ENCODE measurements at regions of chr1 and their contacts with region 1.

Region 1: DNA sequence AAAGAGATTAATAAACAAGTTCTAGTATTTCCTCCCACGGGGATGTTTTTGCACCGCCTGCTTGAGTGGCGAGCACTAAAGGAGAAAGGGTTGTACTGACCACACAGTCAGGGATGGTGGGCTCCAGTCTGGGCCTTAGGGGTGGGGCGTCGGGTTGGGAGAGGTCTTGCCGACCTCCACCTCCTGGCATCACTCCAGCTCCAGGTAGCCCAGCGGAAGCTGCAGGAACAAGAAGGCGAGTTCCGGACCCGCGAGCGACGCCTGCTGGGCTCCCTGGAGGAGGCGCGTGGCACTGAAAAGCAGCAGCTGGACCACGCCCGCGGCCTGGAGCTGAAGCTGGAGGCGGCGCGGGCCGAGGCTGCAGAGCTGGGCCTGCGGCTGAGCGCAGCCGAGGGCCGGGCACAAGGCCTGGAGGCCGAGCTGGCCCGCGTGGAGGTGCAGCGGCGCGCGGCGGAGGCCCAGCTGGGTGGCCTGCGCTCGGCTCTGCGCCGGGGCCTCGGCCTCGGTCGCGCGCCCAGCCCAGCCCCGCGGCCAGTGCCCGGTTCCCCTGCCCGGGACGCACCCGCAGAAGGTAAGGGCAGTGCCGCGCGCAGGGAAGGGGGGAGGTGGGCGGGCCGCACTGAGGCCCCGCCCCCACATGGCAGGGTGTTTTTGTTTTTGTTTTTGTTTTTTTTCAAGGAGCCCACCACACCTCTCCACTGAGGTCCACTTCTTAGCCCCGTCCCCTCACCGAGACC is 19.7 kb downstream of the MFAP2 start:
- DNase-seq: peak; percentile 40 to 79 (median 69)
- H3K4me3 ChIP-seq: peak overlapping the region in 56 of 59 donors; percentile 21 to 65 (median 47)
- H3K27ac ChIP-seq: peak overlapping the region in 23 of 59 donors; percentile 3 to 64 (median 29)
- H3K27me3 ChIP-seq: no peaks in the 10 kb centered on the region
- CTCF ChIP-seq: peak in 53 of 56 donors; percentile 24 to 68 (median 56)

Region 2: GRCh38 chr1:17250601-17251000 is 289.9 kb after region 1 on chr1:
- intact Hi-C with region 1: loop called in 1 of 2 experiments (anchors 10 kb)
- DNase-seq: no peak
- H3K4me3 ChIP-seq: no peak overlapping the region
- H3K27ac ChIP-seq: no peak overlapping the region
- H3K27me3 ChIP-seq: peaks cover 0 to 26% (median 0%) of the 10 kb centered on the region in 45 donors
- CTCF ChIP-seq: no peak